Activated naive CD4-positive, alpha-beta T cell treated with anti-CD3 and anti-CD28 coated beads for 36 hours (primary cell): ENCODE measurements at regions of chr17 and their contacts with region 1.

Region 1: DNA sequence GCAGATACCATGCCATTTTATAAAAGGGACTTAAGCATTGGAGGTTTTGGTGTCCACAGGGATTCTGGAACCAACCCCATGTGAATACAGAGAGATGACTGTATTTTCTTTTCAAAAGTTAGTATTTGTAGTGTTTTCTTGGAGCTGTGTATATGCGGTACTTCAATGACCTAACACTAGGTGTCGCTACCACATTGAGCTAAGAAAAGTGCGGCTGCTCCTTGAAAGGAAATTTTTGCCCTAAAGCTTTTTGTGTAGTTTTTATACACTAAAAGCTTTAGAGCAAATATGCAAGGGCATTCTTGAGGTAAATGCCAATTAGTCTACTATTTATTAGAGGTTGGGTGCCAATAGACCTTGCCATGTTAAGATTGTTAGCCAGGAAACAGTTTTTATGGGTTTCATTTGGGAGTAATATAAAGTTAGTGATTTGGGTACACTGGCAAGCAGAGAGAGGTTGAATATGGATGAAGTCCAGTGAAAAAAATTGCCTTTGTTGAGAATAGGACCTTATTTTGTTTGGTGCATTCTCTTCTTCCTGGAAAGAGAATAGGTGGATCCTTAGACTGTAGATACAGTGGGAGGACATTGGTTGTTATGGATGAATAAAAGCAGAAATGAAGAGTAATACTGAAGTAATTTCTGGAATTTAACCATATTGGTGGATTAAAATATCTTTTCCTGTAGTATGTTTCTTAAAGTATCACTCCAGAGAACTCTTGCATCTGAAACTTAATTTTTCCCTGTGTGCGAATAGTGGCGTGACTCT is 43.3 kb downstream of the BCAS3 start:
- DNase-seq: peak; percentile 57
- H3K4me3 Mint-ChIP-seq: no peak overlapping the region
- H3K27ac Mint-ChIP-seq: no peak overlapping the region
- H3K4me1 Mint-ChIP-seq: peaks cover 2% of the 10 kb centered on the region
- H3K27me3 Mint-ChIP-seq: no peaks in the 10 kb centered on the region

Region 2: DNA sequence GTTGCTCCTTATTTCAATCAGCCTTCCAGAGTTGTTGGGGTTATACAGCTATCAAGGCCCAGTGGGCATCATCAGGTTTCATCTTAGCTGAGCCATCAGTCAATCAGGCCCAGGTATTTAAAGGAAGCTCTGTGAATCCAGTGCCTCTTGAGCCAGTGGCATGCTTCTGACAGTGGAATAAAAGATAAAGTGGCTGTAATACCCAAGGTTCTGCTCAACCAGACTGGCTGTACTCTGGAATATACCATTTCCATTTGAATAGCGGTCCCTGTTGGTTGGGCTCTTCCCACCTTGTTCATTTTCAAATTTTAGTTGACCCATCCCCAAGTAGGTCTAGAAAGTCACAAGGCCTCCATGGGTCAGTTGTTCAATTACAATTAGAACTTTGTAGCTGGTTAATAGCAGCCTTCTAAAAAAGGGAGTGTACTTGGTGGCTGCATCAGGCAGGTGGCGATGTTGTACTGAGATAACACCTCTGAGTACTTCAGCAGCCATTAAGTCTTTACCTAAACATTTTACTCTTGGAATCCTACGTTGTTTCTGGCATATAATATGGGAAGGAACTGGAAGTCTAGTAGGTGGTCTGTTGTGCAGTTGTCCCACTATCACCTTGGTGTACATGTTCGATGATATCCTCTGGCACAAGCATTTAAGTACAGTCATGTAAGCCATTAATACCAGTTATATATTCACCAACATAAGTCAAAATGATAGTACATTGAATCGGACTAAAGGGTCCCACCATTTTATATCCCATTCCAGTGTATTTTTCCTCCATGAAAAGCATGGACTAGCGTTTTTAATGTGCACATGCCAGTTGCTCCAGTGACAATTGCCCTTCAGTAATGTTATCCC is 250.8 kb after region 1 on chr17:
- CTCF ChIA-PET with region 1: interaction called, 10 read pairs
- intact Hi-C with region 1: loop called (anchors 5 kb)
- DNase-seq: peak; percentile 69
- H3K4me3 Mint-ChIP-seq: no peak overlapping the region
- H3K27ac Mint-ChIP-seq: no peak overlapping the region
- H3K4me1 Mint-ChIP-seq: no peaks in the 10 kb centered on the region
- H3K27me3 Mint-ChIP-seq: no peaks in the 10 kb centered on the region

Region 3: GRCh38 chr17:61002316-61002736 is 281.4 kb after region 1 on chr17:
- CTCF ChIA-PET with region 1: interaction called, 5 read pairs
- intact Hi-C with region 1: loop called (anchors 5 kb)
- DNase-seq: no peak
- H3K4me3 Mint-ChIP-seq: no peak overlapping the region
- H3K27ac Mint-ChIP-seq: no peak overlapping the region
- H3K4me1 Mint-ChIP-seq: no peaks in the 10 kb centered on the region
- H3K27me3 Mint-ChIP-seq: no peaks in the 10 kb centered on the region

Region 4: DNA sequence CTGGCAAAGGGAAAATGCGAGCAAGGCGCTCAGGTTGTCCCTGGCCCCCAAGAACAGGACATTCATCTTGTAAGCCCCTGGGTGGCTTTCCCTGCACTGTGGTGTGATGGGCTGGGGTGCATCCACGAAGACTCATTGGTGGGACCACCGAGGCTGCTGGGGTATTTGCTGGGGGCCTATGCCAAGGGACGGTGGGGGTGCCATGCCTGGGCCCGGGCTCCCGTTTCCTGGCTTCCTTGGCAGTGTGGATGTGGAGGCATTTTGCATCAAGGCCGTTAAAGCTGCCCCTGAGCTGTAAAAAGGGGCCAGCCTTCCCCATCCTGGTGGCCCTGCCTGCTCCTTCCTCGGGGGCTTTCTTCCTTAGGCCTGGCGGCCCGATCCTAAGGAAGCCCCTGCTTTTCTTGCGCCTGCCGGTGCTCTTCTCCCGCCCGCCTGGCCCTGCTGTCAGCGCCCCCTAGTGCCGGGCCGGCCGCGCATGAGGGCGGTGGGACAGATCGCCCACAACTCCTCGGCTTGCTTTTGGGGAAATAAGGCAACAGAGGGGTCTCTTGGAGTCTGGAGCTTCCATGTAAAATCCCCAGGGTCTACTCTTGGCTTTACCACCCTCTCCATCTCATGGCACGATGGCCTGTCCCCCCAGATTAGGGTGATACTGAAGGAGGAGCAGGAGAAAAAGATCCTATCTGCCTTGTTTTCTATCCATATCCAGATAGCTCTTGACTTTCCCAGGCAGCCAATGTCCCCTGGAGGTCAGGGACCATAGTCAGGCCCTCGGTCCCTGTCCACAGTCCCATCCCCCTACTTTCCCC is 668.9 kb after region 1 on chr17:
- CTCF ChIA-PET with region 1: interaction called, 3 read pairs
- intact Hi-C with region 1: loop called (anchors 1 kb)
- DNase-seq: peak; percentile 59
- H3K4me3 Mint-ChIP-seq: no peak overlapping the region
- H3K27ac Mint-ChIP-seq: no peak overlapping the region
- H3K4me1 Mint-ChIP-seq: peaks cover 4% of the 10 kb centered on the region
- H3K27me3 Mint-ChIP-seq: peaks cover 10% of the 10 kb centered on the region